Dorsolateral prefrontal cortex (tissue), 120 donors: ENCODE measurements at regions of chr20 and their contacts with region 1.

Region 1: DNA sequence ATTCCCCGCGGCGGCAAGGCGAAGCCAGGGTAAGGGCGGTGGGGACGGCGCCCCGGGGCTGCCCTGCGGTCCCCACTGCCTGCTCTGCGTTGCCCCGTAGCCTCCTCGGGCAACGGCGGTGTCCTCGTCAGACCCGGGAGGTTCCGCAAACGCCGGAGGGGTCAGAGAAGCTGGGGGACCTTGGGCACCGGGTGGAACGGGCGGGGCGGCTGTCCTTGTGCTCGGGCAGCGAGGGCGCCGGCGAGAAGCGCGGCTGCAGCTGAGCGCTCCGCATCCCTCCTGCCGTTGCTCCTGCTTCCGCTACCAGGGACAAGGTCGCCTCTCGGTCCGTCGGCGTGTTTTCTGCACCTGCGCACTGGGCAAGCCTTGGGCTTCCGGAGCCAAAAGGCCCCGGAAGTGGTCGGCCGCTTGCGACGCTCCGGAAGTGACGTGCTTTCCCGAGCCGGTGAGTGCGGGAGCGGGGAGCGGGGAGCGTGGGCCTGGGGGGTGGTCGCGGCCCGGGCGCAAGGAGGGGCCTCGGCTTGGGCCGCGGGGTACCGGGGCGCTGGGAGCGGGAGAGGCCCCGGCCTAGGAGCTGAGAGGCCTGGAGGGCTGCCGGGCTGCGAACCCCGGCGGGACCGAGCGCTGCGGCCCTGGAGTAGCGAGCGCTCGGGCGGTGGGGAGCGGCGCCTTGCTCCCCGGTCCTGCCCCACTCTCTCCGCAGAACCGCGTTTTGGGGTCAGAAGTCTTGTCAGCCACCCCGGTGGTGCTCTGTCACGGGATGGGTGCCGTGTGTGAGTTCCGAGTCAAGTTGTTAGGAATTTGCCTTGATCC is at the start of gene MTG2:
- DNase-seq: peak; percentile 89 to 96 (median 92)
- H3K4me3 ChIP-seq: peak within 1 kb of the TSS; percentile 72 to 100 (median 98)
- H3K27ac ChIP-seq: peak within 1 kb of the TSS; percentile 54 to 96 (median 91)
- H3K27me3 ChIP-seq: no peaks in the 10 kb centered on the region
- CTCF ChIP-seq: peak in 34 of 56 donors; percentile 7 to 61 (median 28)
- total RNA-seq, gene MTG2: 29.6 to 57.5 (median 39.1) TPM

Region 2: DNA sequence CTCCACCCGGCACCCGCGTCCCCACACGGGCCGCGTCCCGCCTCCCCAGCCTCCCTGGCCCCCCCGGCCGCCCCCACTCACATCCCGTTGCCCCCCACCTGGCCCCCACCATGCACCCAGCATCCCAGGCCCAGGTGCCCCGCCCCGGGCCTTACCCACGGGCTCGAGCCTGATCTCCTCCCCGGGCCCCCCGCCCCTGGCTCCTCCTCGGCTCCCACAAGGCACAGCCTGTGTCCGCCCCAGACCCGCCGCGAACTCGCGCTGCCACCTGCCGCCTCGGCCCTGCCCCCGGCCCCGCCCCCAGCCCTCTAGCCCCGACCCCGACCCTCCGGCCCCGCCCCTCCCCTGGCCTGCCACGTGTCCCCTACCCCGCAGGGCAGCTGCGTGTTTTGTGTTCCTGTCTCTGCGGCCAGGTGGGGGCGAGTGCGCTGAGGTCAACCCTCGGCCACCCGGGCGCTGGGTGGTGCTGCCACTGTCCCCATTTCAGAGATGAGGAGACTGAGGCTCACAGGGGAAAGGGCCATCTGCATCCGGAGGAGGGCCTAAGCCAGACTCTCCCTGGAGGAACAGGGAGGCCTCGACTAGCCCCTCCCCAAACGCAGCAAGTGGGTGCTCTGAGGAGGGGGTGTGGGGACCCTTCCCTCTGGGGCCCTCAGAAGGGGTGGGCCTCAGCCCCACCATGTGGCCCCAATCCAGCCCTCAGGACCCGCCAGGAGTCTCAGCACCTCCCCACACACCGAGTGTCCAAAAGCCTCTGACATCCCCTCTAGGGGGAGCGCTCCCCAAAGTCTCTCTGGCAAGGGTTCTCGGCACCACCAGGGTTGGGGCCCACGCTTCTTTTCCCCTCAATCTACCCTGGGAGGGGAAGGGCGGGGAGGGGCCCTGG is 217.0 kb before region 1 on chr20:
- intact Hi-C with region 1: no loop called
- DNase-seq: peak in 3 of 10 donors; percentile 11 to 39 (median 15)
- H3K4me3 ChIP-seq: peak overlapping the region in 29 of 59 donors; percentile 3 to 45 (median 28)
- H3K27ac ChIP-seq: no peak overlapping the region
- H3K27me3 ChIP-seq: peaks cover 0 to 19% (median 0%) of the 10 kb centered on the region in 45 donors
- CTCF ChIP-seq: no peak

Region 3: DNA sequence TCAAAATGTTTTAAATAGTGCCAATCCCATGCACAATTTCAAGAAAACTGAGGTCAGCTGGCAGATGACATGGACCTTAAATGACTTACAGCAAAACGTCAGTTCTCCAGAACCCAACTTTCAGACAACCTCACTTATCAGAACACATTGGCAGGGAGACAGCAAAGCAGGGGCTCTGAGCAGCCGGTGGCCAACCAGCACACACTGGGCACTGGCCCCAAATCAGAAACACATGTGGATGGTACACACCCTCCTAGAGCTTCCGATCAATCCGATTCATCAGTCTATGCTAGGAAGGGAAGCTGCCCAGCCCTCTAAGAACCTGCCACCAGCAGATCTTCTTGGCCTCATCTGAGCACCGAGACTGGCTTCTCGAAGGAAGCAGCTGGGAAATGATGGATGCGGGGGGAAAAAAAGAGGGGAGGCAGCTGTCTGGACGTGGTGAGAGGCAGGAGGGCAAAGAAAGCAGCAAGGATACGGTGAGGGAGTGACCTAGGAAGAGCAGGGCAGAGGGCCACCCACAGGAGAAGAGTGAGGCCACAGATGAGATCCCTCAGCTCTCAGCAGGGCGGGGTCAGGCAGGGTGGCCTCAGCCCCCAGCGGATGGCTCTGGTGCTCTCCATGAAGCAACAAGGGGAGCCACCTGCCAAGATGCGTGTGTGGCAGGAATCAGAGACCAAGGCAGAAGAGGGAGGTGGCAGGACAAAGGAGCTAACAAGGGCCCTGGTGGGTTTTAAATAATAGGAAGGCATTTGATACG is 150.0 kb before region 1 on chr20:
- intact Hi-C with region 1: no loop called
- DNase-seq: peak in 1 of 10 donors; percentile 36
- H3K4me3 ChIP-seq: no peak overlapping the region
- H3K27ac ChIP-seq: no peak overlapping the region
- H3K27me3 ChIP-seq: no peaks in the 10 kb centered on the region
- CTCF ChIP-seq: no peak

Region 4: DNA sequence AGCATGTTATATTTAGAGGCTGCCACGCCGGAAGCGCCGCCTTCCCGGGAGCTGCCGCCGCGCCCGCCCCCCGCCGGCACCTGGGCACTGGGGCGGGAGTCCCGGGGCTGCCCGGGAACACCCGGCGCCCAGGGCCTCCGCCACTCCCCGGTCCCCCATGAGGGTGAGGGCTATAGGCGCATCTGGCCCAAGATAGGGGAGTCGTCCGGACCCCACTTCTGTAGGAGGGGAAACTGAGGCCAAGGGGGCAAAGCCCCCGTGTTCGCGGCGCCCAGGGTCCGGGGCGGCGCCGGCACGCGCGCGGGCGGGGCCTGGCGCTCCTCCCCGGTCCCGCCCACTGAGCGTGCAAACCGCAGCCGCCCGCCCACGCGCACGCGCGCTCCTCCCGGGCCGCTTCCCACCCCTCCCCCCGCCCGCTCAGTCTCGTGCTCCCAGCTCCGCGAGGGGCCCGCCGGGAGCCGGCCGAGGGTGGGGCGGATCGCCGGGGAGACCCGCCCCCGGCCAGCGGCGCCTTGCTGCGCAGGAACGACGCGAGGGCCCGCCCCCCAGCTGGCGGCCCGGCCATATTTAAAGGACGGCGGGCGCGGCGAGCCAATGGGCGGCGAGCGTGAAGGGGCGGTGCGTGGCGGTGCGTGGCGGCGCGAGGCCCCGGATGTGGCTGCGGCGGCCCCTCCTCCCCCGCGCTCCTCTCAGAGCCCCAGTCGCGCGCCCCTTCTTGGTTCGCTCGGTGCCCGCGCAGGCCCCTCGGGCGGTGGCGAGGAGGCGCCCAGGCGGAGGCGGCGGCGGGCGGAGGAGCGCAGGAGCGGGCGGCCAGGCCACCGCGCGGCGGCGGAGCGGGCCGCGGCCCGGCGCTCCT is 60.8 kb before region 1 on chr20 and contains the start of gene LSM14B:
- intact Hi-C with region 1: loop called in 1 of 2 experiments (anchors 1 kb)
- DNase-seq: peak; percentile 82 to 97 (median 92)
- H3K4me3 ChIP-seq: peak within 1 kb of the TSS; percentile 61 to 97 (median 84)
- H3K27ac ChIP-seq: peak within 1 kb of the TSS; percentile 13 to 98 (median 93)
- H3K27me3 ChIP-seq: peaks cover 0 to 9% (median 0%) of the 10 kb centered on the region in 45 donors
- CTCF ChIP-seq: peak in 6 of 56 donors; percentile 7 to 29 (median 12)
- total RNA-seq, gene LSM14B: 50.8 to 92.9 (median 73.1) TPM

Region 5: DNA sequence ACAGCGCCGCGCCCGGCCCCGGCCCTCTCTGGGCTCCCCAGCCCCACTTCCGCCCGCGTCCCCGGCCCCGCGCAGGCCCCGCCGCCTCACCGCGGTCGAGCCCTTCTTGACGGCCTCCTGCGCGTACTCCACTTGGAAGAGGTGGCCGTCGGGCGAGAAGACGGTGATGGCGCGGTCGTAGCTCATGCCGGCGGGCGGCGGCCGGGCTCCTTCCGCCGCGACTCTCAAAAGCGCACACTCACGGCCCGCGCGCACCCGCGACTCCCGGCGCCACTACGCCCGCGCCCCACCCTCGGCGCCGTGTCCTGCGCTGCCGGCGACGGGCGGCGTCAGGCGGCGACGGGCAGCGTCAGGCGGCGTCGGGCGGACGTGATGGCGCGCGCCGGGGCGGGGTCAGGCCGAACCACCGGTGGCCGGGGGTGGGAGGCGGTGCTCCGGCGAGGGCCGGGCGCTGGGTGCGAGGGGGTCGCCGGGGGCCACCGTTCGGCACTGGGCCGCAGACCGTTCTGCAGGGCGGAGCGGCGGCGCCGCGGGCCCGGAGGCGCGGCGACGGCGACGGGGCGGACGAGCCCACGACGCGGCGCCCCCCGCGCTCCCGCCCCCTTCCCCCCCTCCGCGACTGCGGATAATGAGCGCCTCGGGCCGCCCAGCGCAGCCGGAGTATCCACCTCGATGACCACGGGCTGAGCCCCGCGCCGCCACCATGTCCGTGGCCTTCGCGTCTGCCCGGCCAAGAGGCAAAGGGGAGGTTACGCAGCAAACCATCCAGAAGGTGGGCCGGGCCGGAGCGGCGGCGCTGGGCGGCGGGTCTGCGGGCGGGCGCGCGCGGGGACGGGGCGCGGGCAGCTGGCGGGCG is 39.5 kb before region 1 on chr20 and contains the starts of genes PSMA7 and SS18L1:
- intact Hi-C with region 1: loop called (anchors 1 to 5 kb)
- DNase-seq: peak; percentile 66 to 93 (median 84)
- H3K4me3 ChIP-seq: peak within 1 kb of the TSS; percentile 61 to 98 (median 86)
- H3K27ac ChIP-seq: peak within 1 kb of the TSS in 58 of 59 donors; percentile 57 to 100 (median 94)
- H3K27me3 ChIP-seq: no peaks in the 10 kb centered on the region
- CTCF ChIP-seq: peak in 3 of 56 donors; percentile 12 to 29 (median 13)
- total RNA-seq, gene PSMA7: 92.8 to 154 (median 124) TPM
- total RNA-seq, gene SS18L1: 23.7 to 55.2 (median 35.7) TPM

Region 6: DNA sequence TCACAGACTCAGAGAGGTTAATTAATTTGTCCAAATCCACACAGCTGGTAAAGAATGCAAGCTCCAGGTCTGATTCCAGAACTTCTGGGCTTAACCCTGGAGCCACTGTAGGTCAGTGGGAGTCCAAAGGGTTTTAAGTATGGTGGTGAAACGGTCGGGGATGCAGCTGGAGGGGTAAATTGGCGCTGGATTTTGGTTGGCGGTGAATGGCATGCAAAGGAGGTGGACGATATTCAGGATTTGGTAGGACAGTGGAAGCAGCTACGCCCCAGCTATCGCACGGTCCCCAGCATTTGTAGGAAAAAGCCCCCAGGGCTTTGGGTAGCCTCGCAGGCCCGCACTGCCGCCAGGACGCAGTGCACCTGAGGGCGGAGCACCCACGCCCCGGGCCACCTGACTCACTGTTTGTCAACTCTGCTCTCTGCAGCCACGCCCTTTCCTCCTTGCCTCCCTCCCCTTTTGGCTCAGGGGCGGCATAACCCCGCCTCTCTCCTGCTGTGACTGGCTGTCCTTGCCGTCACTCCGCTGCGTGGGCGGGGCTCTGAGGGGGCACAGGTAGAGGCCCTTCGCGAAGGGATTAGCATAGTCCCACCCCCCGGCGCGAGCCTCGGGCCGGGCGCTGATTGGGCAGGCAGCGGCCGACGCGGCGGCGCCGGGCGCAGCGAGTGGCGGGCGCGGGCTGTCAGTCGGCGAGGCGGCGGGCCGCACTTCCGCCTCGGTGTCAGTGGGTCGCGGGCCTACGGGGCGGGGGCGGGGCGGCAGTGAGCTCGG is 55.2 kb after region 1 on chr20 and contains the start of gene OSBPL2:
- intact Hi-C with region 1: loop called in 1 of 2 experiments (anchors 5 kb)
- DNase-seq: peak; percentile 99 to 100 (median 100)
- H3K4me3 ChIP-seq: peak within 1 kb of the TSS; percentile 51 to 88 (median 77)
- H3K27ac ChIP-seq: peak within 1 kb of the TSS in 42 of 59 donors; percentile 1 to 82 (median 53)
- H3K27me3 ChIP-seq: peaks cover 0 to 6% (median 0%) of the 10 kb centered on the region in 45 donors
- CTCF ChIP-seq: peak in 4 of 56 donors; percentile 12 to 29 (median 22)
- total RNA-seq, gene OSBPL2: 54.4 to 93.9 (median 71.6) TPM

Region 7: GRCh38 chr20:62302341-62303058 is 119.7 kb after region 1 on chr20 and contains the start of gene ADRM1:
- intact Hi-C with region 1: loop called (anchors 5 kb)
- DNase-seq: peak; percentile 89 to 99 (median 96)
- H3K4me3 ChIP-seq: peak within 1 kb of the TSS; percentile 70 to 97 (median 89)
- H3K27ac ChIP-seq: peak within 1 kb of the TSS; percentile 42 to 98 (median 94)
- H3K27me3 ChIP-seq: no peaks in the 10 kb centered on the region
- CTCF ChIP-seq: peak; percentile 80 to 100 (median 98)
- total RNA-seq, gene ADRM1: 41.7 to 76.3 (median 60.3) TPM

Region 8: GRCh38 chr20:62386383-62387218 is 203.8 kb after region 1 on chr20 and contains the start of gene RPS21:
- intact Hi-C with region 1: loop called (anchors 2 to 5 kb)
- DNase-seq: peak; percentile 79 to 94 (median 88)
- H3K4me3 ChIP-seq: peak within 1 kb of the TSS; percentile 71 to 100 (median 96)
- H3K27ac ChIP-seq: peak within 1 kb of the TSS; percentile 16 to 97 (median 88)
- H3K27me3 ChIP-seq: no peaks in the 10 kb centered on the region
- CTCF ChIP-seq: peak in 26 of 56 donors; percentile 8 to 52 (median 34)
- total RNA-seq, gene RPS21: 411 to 983 (median 581) TPM